ENCODE measurements at regions of chr3 and their contacts with region 1.

Region 1: GRCh38 chr3:114383875-114384557 is 90.2 kb downstream of the TIGIT start:
- DNase-seq: peak; percentile 40
- ATAC-seq: peak; percentile 98
- H3K4me3 Mint-ChIP-seq: no peak overlapping the region
- H3K27ac Mint-ChIP-seq: no peak overlapping the region
- H3K4me1 Mint-ChIP-seq: peaks cover 4% of the 10 kb centered on the region
- H3K27me3 Mint-ChIP-seq: no peaks in the 10 kb centered on the region
- CTCF ChIP-seq: peak; percentile 68

Region 2: GRCh38 chr3:113668015-113668414 is 716.0 kb before region 1 on chr3:
- CTCF ChIA-PET with region 1: no interaction called
- POLR2A ChIA-PET with region 1: no interaction called
- intact Hi-C with region 1: no loop called
- DNase-seq: no peak
- ATAC-seq: peak; percentile 31
- H3K4me3 Mint-ChIP-seq: peak overlapping the region; percentile 53
- H3K27ac Mint-ChIP-seq: peak overlapping the region; percentile 71
- H3K4me1 Mint-ChIP-seq: peaks cover 53% of the 10 kb centered on the region
- H3K27me3 Mint-ChIP-seq: no peaks in the 10 kb centered on the region
- CTCF ChIP-seq: no peak

Region 3: DNA sequence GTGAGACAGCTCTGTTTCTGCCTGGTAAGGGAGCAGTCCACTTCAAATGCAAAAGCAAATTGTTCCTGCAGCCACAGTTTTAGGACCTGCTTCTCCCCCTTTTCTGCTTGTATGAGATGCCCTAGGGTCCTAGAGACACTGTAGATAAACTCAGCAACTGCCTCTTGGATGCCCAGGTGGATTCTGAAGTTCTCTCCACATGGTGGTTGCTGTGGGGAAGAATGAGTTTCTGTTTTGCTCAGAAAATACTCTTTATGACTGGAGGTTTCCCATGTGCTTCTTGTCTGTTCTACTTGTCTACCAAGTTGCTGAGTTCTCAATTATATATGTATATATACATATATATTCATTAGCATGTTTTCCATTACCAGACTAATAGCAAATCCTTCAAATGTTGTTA is 141.1 kb before region 1 on chr3:
- CTCF ChIA-PET with region 1: no interaction called
- POLR2A ChIA-PET with region 1: no interaction called
- intact Hi-C with region 1: no loop called
- DNase-seq: no peak
- ATAC-seq: peak; percentile 64
- H3K4me3 Mint-ChIP-seq: no peak overlapping the region
- H3K27ac Mint-ChIP-seq: no peak overlapping the region
- H3K4me1 Mint-ChIP-seq: peaks cover 25% of the 10 kb centered on the region
- H3K27me3 Mint-ChIP-seq: no peaks in the 10 kb centered on the region
- CTCF ChIP-seq: no peak

Region 4: GRCh38 chr3:114418724-114419543 is 34.9 kb after region 1 on chr3:
- CTCF ChIA-PET with region 1: interaction called, 23 read pairs
- POLR2A ChIA-PET with region 1: interaction called, 5 read pairs
- intact Hi-C with region 1: loop called (anchors 1 kb)
- DNase-seq: no peak
- ATAC-seq: peak; percentile 75
- H3K4me3 Mint-ChIP-seq: peak overlapping the region; percentile 64
- H3K27ac Mint-ChIP-seq: peak overlapping the region; percentile 83
- H3K4me1 Mint-ChIP-seq: peaks cover 45% of the 10 kb centered on the region
- H3K27me3 Mint-ChIP-seq: no peaks in the 10 kb centered on the region
- CTCF ChIP-seq: peak; percentile 22

Region 5: GRCh38 chr3:114584734-114585371 is 200.8 kb after region 1 on chr3:
- CTCF ChIA-PET with region 1: interaction called, 6 read pairs
- POLR2A ChIA-PET with region 1: no interaction called
- intact Hi-C with region 1: loop called (anchors 1 kb)
- DNase-seq: no peak
- ATAC-seq: peak; percentile 73
- H3K4me3 Mint-ChIP-seq: peak overlapping the region; percentile 63
- H3K27ac Mint-ChIP-seq: peak overlapping the region; percentile 76
- H3K4me1 Mint-ChIP-seq: peaks cover 23% of the 10 kb centered on the region
- H3K27me3 Mint-ChIP-seq: no peaks in the 10 kb centered on the region
- CTCF ChIP-seq: no peak

Region 6: GRCh38 chr3:115040673-115041286 is 656.8 kb after region 1 on chr3:
- CTCF ChIA-PET with region 1: no interaction called
- POLR2A ChIA-PET with region 1: no interaction called
- intact Hi-C with region 1: loop called (anchors 5 kb)
- DNase-seq: no peak
- ATAC-seq: no peak
- H3K4me3 Mint-ChIP-seq: no peak overlapping the region
- H3K27ac Mint-ChIP-seq: no peak overlapping the region
- H3K4me1 Mint-ChIP-seq: no peaks in the 10 kb centered on the region
- H3K27me3 Mint-ChIP-seq: no peaks in the 10 kb centered on the region
- CTCF ChIP-seq: peak; percentile 24

Region 7: GRCh38 chr3:115147329-115148141 is 763.5 kb after region 1 on chr3:
- CTCF ChIA-PET with region 1: no interaction called
- POLR2A ChIA-PET with region 1: no interaction called
- intact Hi-C with region 1: loop called (anchors 10 kb)
- DNase-seq: peak; percentile 81
- ATAC-seq: peak; percentile 77
- H3K4me3 Mint-ChIP-seq: peak overlapping the region; percentile 94
- H3K27ac Mint-ChIP-seq: peak overlapping the region; percentile 98
- H3K4me1 Mint-ChIP-seq: peaks cover 34% of the 10 kb centered on the region
- H3K27me3 Mint-ChIP-seq: no peaks in the 10 kb centered on the region
- CTCF ChIP-seq: no peak

Region 8: GRCh38 chr3:115692887-115693524 is 1309.0 kb after region 1 on chr3:
- CTCF ChIA-PET with region 1: no interaction called
- POLR2A ChIA-PET with region 1: no interaction called
- intact Hi-C with region 1: loop called (anchors 1 kb)
- DNase-seq: peak; percentile 28
- ATAC-seq: peak; percentile 95
- H3K4me3 Mint-ChIP-seq: no peak overlapping the region
- H3K27ac Mint-ChIP-seq: no peak overlapping the region
- H3K4me1 Mint-ChIP-seq: peaks cover 3% of the 10 kb centered on the region
- H3K27me3 Mint-ChIP-seq: no peaks in the 10 kb centered on the region
- CTCF ChIP-seq: no peak